ENCODE measurements at regions of chr1 and their contacts with region 1.

Region 1: DNA sequence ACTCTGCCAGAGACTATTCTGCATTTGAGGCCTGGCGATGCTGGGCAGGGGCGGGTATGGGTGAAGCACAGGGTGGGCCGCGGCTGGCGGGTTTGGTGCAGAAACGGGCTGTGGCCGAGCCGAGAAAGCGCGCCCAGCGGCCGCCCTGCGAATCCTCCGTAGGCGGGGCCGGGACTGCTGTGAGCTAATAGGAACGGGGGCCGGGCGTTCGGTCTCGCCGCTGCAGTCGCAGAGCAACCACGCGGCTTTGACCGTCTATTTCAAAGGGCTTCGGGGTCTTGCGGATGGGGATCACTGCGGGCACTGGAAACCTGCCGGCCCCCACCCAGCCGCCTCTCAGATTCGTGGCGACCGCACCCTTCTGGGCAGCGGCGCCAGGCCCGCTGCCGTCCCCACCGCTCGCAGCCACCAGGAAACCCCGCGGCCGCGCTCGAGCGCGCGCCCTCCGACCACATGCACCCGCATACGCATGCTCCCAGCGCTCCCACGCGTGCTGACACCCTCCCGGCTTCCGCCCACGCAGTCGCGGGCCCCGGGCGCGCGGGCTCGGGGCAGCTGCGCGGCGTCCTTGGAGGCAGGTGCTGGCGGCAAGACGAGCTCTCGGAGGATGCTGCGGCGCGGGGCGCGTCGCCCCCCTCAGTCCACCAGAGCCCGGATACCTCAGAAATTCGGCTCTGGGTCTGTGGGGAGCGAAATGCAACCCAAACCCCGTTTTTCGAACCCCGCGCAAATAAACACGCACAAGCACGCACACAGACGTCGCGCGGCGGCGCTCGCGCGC is 32.6 kb downstream of the DNTTIP2 start:
- DNase-seq: peak; percentile 74 to 94 (median 83)
- ATAC-seq: peak; percentile 33
- H3K4me3 ChIP-seq: peak overlapping the region; percentile 82 to 98
- H3K4me3 Mint-ChIP-seq: peak overlapping the region; percentile 94
- H3K27ac ChIP-seq: peak overlapping the region; percentile 86 to 91
- H3K27ac Mint-ChIP-seq: peak overlapping the region; percentile 96
- H3K4me1 ChIP-seq: peaks cover 21% of the 10 kb centered on the region
- H3K4me1 Mint-ChIP-seq: peaks cover 31% of the 10 kb centered on the region
- H3K27me3 ChIP-seq: no peaks in the 10 kb centered on the region
- H3K27me3 Mint-ChIP-seq: no peaks in the 10 kb centered on the region
- CTCF ChIP-seq: no peak

Region 2: DNA sequence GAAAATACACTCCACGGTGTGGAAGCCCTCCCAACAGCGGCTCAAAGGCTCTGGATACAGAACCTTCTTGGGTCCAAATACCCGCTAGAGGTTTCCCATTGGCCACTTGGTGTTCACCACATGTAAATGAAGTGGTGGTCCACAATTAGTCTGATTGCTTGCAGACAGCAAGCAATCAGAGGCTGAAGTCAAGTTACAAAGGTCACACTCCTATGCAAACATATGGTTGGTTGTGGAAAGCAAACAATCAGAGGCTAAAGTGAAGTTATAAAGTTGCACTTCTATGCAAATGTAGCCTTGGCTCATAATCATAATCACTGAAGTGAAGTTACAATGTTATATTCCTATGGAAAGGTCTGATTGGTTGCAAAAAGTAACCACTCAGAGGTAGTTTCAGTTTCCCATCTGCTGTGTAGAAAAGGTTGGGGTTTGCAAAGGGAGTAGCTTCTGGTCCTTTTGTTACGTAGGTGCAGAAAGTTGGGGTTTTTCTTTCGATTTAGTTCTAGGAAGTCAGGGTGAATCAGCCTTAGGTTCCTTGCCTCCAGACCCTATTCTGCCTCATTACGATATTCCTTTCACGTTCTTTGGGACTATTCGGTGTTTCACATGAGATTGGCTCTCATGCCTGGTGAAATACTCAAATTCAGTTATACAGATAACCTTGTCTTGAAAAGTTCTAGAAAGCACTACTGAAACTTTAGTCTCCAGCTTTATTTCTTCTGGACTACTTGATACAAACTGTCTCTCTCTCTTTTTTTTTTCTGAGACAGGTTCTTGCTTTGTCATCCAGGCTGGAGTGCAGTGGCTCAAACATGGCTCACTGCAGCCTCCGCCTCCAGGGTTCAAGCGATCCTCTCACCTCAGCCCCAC is 804.0 kb before region 1 on chr1:
- CTCF ChIA-PET with region 1: no interaction called
- POLR2A ChIA-PET with region 1: no interaction called
- intact Hi-C with region 1: loop called in 1 of 2 experiments (anchors 10 kb)
- DNase-seq: peak in 6 of 9 experiments; percentile 11 to 92 (median 20)
- ATAC-seq: peak; percentile 99
- H3K4me3 ChIP-seq: peak overlapping the region; percentile 32 to 44
- H3K4me3 Mint-ChIP-seq: peak overlapping the region; percentile 83
- H3K27ac ChIP-seq: peak overlapping the region; percentile 40 to 93
- H3K27ac Mint-ChIP-seq: peak overlapping the region; percentile 95
- H3K4me1 ChIP-seq: peaks cover 12% of the 10 kb centered on the region
- H3K4me1 Mint-ChIP-seq: peaks cover 13% of the 10 kb centered on the region
- H3K27me3 ChIP-seq: no peaks in the 10 kb centered on the region
- H3K27me3 Mint-ChIP-seq: no peaks in the 10 kb centered on the region
- CTCF ChIP-seq: no peak

Region 3: DNA sequence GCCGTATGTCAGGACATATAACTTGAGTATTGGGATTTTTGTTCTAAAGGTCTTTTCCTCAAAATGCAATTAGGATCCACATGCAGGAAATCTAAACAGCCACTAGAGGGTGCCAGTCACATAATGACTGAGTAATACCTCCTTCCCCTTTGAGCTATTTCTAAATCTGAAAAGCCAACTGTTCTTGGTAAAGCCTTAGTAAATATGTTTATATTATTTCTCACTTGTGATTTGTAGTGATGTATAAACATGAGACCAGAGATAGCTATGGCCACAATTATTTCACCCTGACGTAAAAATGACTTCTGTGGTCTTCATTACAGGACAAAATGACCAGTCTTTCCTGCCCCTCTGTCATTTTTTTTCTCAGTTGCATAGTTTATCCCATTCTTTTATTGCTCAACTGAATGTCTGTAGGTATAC is 541.7 kb before region 1 on chr1:
- CTCF ChIA-PET with region 1: interaction called, 4 read pairs
- POLR2A ChIA-PET with region 1: no interaction called
- intact Hi-C with region 1: loop called (anchors 2 to 5 kb)
- DNase-seq: peak in 7 of 9 experiments; percentile 15 to 77 (median 53)
- ATAC-seq: peak; percentile 71
- H3K4me3 ChIP-seq: no peak overlapping the region
- H3K4me3 Mint-ChIP-seq: no peak overlapping the region
- H3K27ac ChIP-seq: no peak overlapping the region
- H3K27ac Mint-ChIP-seq: no peak overlapping the region
- H3K4me1 ChIP-seq: no peaks in the 10 kb centered on the region
- H3K4me1 Mint-ChIP-seq: no peaks in the 10 kb centered on the region
- H3K27me3 ChIP-seq: no peaks in the 10 kb centered on the region
- H3K27me3 Mint-ChIP-seq: no peaks in the 10 kb centered on the region
- CTCF ChIP-seq: peak; percentile 95

Region 4: GRCh38 chr1:93447516-93448291 is 398.7 kb before region 1 on chr1 and contains the start of gene FNBP1L:
- CTCF ChIA-PET with region 1: interaction called, 5 read pairs
- POLR2A ChIA-PET with region 1: no interaction called
- intact Hi-C with region 1: loop called in 1 of 2 experiments (anchors 2 kb)
- DNase-seq: peak in 8 of 9 experiments; percentile 34 to 69 (median 51)
- ATAC-seq: peak; percentile 74
- H3K4me3 ChIP-seq: peak within 1 kb of the TSS; percentile 53 to 66
- H3K4me3 Mint-ChIP-seq: peak within 1 kb of the TSS; percentile 91
- H3K27ac ChIP-seq: no peak within 1 kb of the TSS
- H3K27ac Mint-ChIP-seq: no peak within 1 kb of the TSS
- H3K4me1 ChIP-seq: peaks cover 20% of the 10 kb centered on the region
- H3K4me1 Mint-ChIP-seq: peaks cover 17% of the 10 kb centered on the region
- H3K27me3 ChIP-seq: peaks cover 18 to 28% of the 10 kb centered on the region in 2 experiments
- H3K27me3 Mint-ChIP-seq: peaks cover 47% of the 10 kb centered on the region
- CTCF ChIP-seq: no peak
- total RNA-seq, gene FNBP1L: 0.31 to 0.35 TPM

Region 5: GRCh38 chr1:93878889-93879586 is 32.6 kb after region 1 on chr1 and contains the start of gene DNTTIP2:
- CTCF ChIA-PET with region 1: interaction called, 5 read pairs
- POLR2A ChIA-PET with region 1: interaction called, 27 read pairs
- intact Hi-C with region 1: loop called (anchors 1 to 2 kb)
- DNase-seq: peak; percentile 74 to 95 (median 88)
- ATAC-seq: peak; percentile 81
- H3K4me3 ChIP-seq: peak within 1 kb of the TSS; percentile 87 to 99
- H3K4me3 Mint-ChIP-seq: peak within 1 kb of the TSS; percentile 95
- H3K27ac ChIP-seq: peak within 1 kb of the TSS; percentile 95 to 99
- H3K27ac Mint-ChIP-seq: peak within 1 kb of the TSS; percentile 98
- H3K4me1 ChIP-seq: peaks cover 32% of the 10 kb centered on the region
- H3K4me1 Mint-ChIP-seq: peaks cover 46% of the 10 kb centered on the region
- H3K27me3 ChIP-seq: no peaks in the 10 kb centered on the region
- H3K27me3 Mint-ChIP-seq: no peaks in the 10 kb centered on the region
- CTCF ChIP-seq: no peak
- total RNA-seq, gene DNTTIP2: 126 to 130 TPM

Region 6: GRCh38 chr1:95072532-95073419 is 1226.4 kb after region 1 on chr1 and contains the start of gene ALG14:
- CTCF ChIA-PET with region 1: no interaction called
- POLR2A ChIA-PET with region 1: interaction called, 4 read pairs
- intact Hi-C with region 1: loop called in 1 of 2 experiments (anchors 10 kb)
- DNase-seq: peak; percentile 86 to 97 (median 95)
- ATAC-seq: peak; percentile 89
- H3K4me3 ChIP-seq: peak within 1 kb of the TSS; percentile 76 to 86
- H3K4me3 Mint-ChIP-seq: peak within 1 kb of the TSS; percentile 99
- H3K27ac ChIP-seq: peak within 1 kb of the TSS; percentile 61 to 86
- H3K27ac Mint-ChIP-seq: peak within 1 kb of the TSS; percentile 97
- H3K4me1 ChIP-seq: peaks cover 10% of the 10 kb centered on the region
- H3K4me1 Mint-ChIP-seq: peaks cover 13% of the 10 kb centered on the region
- H3K27me3 ChIP-seq: peaks cover 0 to 4% of the 10 kb centered on the region in 2 experiments
- H3K27me3 Mint-ChIP-seq: peaks cover 9% of the 10 kb centered on the region
- CTCF ChIP-seq: no peak
- total RNA-seq, gene ALG14: 0.27 to 0.61 TPM